Endothelial cell of umbilical vein (primary cell): ENCODE measurements at regions of chr12 and their contacts with region 1.

Region 1: DNA sequence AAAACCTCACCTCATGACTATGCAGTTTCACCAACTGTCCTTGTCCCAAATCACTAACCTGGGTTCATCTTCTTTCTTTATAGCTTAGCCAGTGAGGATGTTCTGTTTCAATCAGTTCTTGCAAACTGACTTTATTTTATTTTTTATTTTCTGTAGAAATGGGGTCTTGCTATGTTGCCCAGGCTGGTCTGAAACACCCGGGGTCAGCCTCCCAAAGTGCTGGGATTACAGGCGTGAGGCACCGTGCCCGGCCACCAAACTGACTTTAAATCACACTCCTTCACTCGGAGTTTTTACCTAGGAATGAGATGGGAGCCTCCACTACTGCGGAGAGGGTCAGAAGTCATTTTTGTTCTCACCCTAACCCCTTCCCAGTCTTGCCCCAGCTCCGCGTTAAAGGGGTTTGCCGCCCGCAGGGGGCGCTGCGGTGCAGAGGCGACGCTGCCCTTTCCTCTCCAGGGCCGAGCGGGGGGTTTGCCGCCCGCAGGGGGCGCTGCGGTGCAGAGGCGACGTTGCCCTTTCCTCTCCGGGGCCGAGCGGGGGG is 7.0 kb upstream of the B4GALNT3 start:
- DNase-seq: no peak
- H3K4me3 ChIP-seq: no peak overlapping the region
- H3K27ac ChIP-seq: no peak overlapping the region
- H3K4me1 ChIP-seq: no peaks in the 10 kb centered on the region
- H3K27me3 ChIP-seq: peaks cover 36% of the 10 kb centered on the region in 2 experiments
- CTCF ChIP-seq: peak in 1 of 2 donors; percentile 27
- POLR2A ChIP-seq: no peak

Region 2: DNA sequence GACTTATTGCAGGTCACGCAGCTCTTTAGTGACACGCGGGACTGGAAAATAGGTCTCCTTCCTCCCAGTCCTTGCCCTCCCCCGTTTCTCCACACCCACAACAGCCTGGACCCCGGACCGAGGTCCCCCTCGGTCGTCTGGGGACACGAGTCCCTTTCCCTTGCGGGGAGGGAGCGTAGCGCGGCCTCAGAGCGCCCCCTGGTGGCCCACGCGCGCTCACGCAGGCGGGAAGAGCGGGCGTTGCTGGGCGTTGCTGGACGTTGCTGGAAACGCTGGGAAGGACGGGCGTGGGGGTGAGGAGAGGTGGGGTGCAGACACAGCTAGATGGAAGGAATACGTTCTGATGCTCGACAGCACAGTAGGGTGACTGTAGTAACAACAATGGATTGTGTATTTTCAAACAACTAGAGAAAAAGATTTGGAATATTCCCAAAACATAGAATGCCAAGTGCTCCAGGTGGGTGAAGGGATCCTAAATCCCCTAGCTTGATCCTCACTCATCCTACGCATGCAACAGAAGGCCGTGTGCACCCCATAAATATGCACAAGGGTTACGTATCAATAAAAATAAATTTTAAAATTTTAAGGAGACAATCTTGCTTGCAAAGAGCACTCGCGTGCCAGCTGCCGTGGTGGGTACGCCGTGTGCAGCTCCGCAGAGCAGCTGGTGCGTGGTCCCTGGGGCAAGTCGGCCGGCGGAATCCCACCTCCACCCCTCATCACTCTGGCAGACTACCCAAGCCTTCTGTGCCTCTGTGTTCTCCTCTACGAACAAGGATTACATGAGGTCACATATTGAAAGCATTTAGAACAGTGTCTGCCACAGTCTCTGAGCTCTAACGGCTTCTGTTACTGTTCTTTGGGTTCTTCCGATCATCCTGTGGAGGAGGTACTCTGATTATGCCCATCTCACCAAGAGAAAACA is 94.4 kb after region 1 on chr12:
- CTCF ChIA-PET with region 1: interaction called, 67 read pairs
- POLR2A ChIA-PET with region 1: no interaction called
- dilution Hi-C with region 1: no loop called
- intact Hi-C with region 1: loop called (anchors 1 kb)
- DNase-seq: peak; percentile 61
- H3K4me3 ChIP-seq: no peak overlapping the region
- H3K27ac ChIP-seq: no peak overlapping the region
- H3K4me1 ChIP-seq: peaks cover 9% of the 10 kb centered on the region
- H3K27me3 ChIP-seq: peaks cover 0 to 10% of the 10 kb centered on the region in 2 experiments
- CTCF ChIP-seq: peak; percentile 98
- POLR2A ChIP-seq: no peak

Region 3: GRCh38 chr12:1059162-1059561 is 606.4 kb after region 1 on chr12:
- CTCF ChIA-PET with region 1: no interaction called
- POLR2A ChIA-PET with region 1: no interaction called
- dilution Hi-C with region 1: no loop called
- intact Hi-C with region 1: no loop called
- DNase-seq: no peak
- H3K4me3 ChIP-seq: no peak overlapping the region
- H3K27ac ChIP-seq: no peak overlapping the region
- H3K4me1 ChIP-seq: no peaks in the 10 kb centered on the region
- H3K27me3 ChIP-seq: no peaks in the 10 kb centered on the region
- CTCF ChIP-seq: no peak
- POLR2A ChIP-seq: no peak